Aorta (tissue), 5 donors: ENCODE measurements at regions of chr1 and their contacts with region 1.

Region 1: DNA sequence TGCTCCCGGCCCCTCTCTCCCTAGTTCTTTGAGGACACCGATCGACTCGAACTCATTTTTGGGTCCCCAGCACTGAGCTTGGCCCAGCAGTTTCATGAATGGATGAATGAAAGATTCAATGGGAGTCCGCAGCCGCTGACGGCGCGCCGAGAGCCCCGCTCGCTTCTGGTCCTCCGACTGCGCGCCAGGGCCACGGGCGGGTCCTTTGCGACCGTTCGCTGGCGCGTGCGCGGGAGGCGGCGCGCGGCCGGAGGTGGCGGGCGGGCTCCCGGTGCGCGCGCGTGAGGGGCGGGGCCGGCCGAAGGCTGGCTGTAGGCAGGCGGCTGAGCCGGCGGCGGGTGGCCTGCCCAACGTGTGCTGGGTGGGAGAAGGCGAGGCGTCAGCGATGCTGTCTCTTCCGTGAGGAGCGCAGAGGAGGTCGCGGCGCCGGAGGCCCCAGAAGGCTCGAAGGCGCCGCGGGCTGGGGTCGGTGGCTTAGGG is at the start of gene MAST2:
- DNase-seq: peak; percentile 94 to 96
- ATAC-seq: peak; percentile 98
- H3K4me3 ChIP-seq: peak within 1 kb of the TSS; percentile 40 to 75
- H3K27ac ChIP-seq: peak within 1 kb of the TSS; percentile 57 to 92
- H3K4me1 ChIP-seq: peaks cover 0 to 3% of the 10 kb centered on the region in 2 donors
- H3K27me3 ChIP-seq: no peaks in the 10 kb centered on the region
- total RNA-seq, gene MAST2: 45.6 to 53.9 TPM

Region 2: GRCh38 chr1:45750298-45751038 is 52.9 kb before region 1 on chr1 and contains the start of gene IPP:
- intact Hi-C with region 1: loop called (anchors 2 to 5 kb)
- DNase-seq: peak; percentile 99
- ATAC-seq: peak; percentile 100
- H3K4me3 ChIP-seq: peak within 1 kb of the TSS; percentile 56 to 74
- H3K27ac ChIP-seq: peak within 1 kb of the TSS; percentile 73 to 96
- H3K4me1 ChIP-seq: no peaks in the 10 kb centered on the region
- H3K27me3 ChIP-seq: no peaks in the 10 kb centered on the region
- total RNA-seq, gene IPP: 8.4 to 14.2 TPM

Region 3: GRCh38 chr1:46278807-46279206 is 475.5 kb after region 1 on chr1:
- intact Hi-C with region 1: no loop called
- DNase-seq: no peak
- ATAC-seq: no peak
- H3K4me3 ChIP-seq: no peak overlapping the region
- H3K27ac ChIP-seq: no peak overlapping the region
- H3K4me1 ChIP-seq: no peaks in the 10 kb centered on the region
- H3K27me3 ChIP-seq: no peaks in the 10 kb centered on the region